ENCODE measurements at regions of chr6 and their contacts with region 1.

Region 1: GRCh38 chr6:99364026-99364425 is 14.6 kb upstream of the FAXC start:
- DNase-seq: no peak
- H3K4me3 Mint-ChIP-seq: no peak overlapping the region
- H3K27ac Mint-ChIP-seq: peak overlapping the region; percentile 34
- H3K4me1 Mint-ChIP-seq: peaks cover 16% of the 10 kb centered on the region
- H3K27me3 Mint-ChIP-seq: no peaks in the 10 kb centered on the region

Region 2: DNA sequence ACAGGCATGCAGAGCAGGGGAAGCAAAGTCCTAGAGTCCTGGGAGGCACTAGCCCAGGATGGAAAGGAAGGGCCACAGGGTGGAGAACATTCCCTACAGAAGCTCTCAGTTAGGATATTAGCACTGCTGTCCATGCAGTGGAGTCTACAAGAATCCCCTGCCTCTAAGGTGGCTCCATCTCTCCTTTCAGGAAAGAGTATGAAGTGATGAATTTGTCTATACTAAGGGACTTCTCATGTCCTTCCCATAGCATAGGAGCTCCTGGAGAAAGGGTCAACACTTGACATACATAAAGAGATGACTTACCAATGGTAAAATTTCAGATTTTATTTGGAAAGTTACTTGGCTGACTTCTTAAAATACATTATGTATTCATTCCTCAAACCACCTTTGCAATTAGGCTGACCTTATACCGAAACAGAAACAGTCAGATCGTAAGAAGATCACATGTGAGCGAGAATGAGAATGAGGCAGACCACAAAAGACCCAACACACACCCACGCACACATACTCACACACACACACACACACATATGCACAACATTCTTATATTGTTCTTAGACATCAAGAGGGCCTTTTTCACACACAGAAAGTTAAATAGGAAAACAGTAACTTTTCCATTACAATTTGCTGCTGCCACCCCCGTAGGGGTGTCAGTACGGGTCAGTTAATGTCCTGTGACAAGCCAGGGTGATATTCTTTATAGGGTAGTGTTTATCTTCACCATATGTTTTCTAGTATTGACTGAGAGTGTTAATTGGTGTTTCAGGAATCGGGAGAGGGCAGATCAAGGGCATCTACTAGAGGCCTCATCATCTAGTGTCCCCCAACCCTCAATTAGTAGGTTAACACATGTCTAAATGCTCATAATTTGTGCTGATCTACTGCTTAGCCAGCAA is 174.0 kb before region 1 on chr6:
- intact Hi-C with region 1: loop called (anchors 2 kb)
- DNase-seq: peak; percentile 13
- H3K4me3 Mint-ChIP-seq: no peak overlapping the region
- H3K27ac Mint-ChIP-seq: no peak overlapping the region
- H3K4me1 Mint-ChIP-seq: peaks cover 17% of the 10 kb centered on the region
- H3K27me3 Mint-ChIP-seq: peaks cover 34% of the 10 kb centered on the region

Region 3: GRCh38 chr6:99219788-99220187 is 144.2 kb before region 1 on chr6:
- intact Hi-C with region 1: no loop called
- DNase-seq: no peak
- H3K4me3 Mint-ChIP-seq: no peak overlapping the region
- H3K27ac Mint-ChIP-seq: no peak overlapping the region
- H3K4me1 Mint-ChIP-seq: no peaks in the 10 kb centered on the region
- H3K27me3 Mint-ChIP-seq: no peaks in the 10 kb centered on the region

Region 4: DNA sequence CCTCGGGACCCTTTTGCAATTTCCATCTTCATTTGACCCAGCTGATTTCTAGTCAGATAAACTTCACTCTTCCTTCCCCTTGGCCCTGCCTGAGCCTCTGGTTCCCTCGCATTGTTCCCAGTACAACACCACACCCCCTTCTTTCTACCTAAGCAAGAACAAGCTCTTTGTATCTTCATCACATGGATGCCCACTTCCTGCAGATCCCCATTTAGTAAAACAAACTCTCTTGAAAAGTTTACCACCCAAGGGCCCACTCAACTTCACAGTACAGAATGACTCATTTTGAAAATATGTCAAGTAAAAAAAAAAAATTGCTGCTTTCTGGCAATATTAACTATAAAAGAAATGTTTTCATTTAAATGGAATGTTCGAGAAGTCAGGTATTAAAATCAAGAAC is 19.7 kb before region 1 on chr6:
- intact Hi-C with region 1: loop called (anchors 2 kb)
- DNase-seq: no peak
- H3K4me3 Mint-ChIP-seq: no peak overlapping the region
- H3K27ac Mint-ChIP-seq: no peak overlapping the region
- H3K4me1 Mint-ChIP-seq: peaks cover 11% of the 10 kb centered on the region
- H3K27me3 Mint-ChIP-seq: peaks cover 54% of the 10 kb centered on the region

Measured in activated T-helper 2 cell treated with anti-CD3 and anti-CD28 coated beads, Interferon-gamma antibody, Interleukin-2, Interleukin-4, amounts not matched to agents 10 μg/mL and 5 μg/mL and 100 μg/mL, durations not matched to agents 14 hours and 24 hours and 36 hours (primary cell).